CD8-positive, alpha-beta T cell (primary cell): ENCODE measurements at regions of chr2 and their contacts with region 1.

Region 1: GRCh38 chr2:190319555-190320498 is at the start of gene HIBCH:
- DNase-seq: peak; percentile 51 to 91 (median 83)
- ATAC-seq: peak; percentile 89
- H3K4me3 ChIP-seq: peak within 1 kb of the TSS; percentile 77 to 94
- H3K4me3 Mint-ChIP-seq: peak within 1 kb of the TSS; percentile 100
- H3K27ac ChIP-seq: peak within 1 kb of the TSS; percentile 66 to 88
- H3K27ac Mint-ChIP-seq: peak within 1 kb of the TSS; percentile 98
- H3K4me1 ChIP-seq: peaks cover 19% of the 10 kb centered on the region
- H3K4me1 Mint-ChIP-seq: peaks cover 50% of the 10 kb centered on the region
- H3K27me3 ChIP-seq: no peaks in the 10 kb centered on the region
- H3K27me3 Mint-ChIP-seq: no peaks in the 10 kb centered on the region
- CTCF ChIP-seq: peak; percentile 70
- total RNA-seq, gene HIBCH: 3.7 to 5.8 TPM

Region 2: GRCh38 chr2:190343500-190344275 is 23.9 kb after region 1 on chr2 and contains the start of gene INPP1:
- CTCF ChIA-PET with region 1: interaction called, 5 read pairs
- POLR2A ChIA-PET with region 1: interaction called, 4 read pairs
- intact Hi-C with region 1: loop called in 1 of 2 experiments (anchors 2 kb)
- DNase-seq: peak; percentile 5 to 62 (median 40)
- ATAC-seq: peak; percentile 71
- H3K4me3 ChIP-seq: peak within 1 kb of the TSS; percentile 54 to 74
- H3K4me3 Mint-ChIP-seq: peak within 1 kb of the TSS; percentile 89
- H3K27ac ChIP-seq: peak within 1 kb of the TSS; percentile 19 to 24
- H3K27ac Mint-ChIP-seq: peak within 1 kb of the TSS; percentile 75
- H3K4me1 ChIP-seq: peaks cover 13% of the 10 kb centered on the region
- H3K4me1 Mint-ChIP-seq: peaks cover 10% of the 10 kb centered on the region
- H3K27me3 ChIP-seq: no peaks in the 10 kb centered on the region
- H3K27me3 Mint-ChIP-seq: peaks cover 2% of the 10 kb centered on the region
- CTCF ChIP-seq: no peak
- total RNA-seq, gene INPP1: 1.6 to 2.9 TPM

Region 3: GRCh38 chr2:190376591-190377245 is 56.9 kb after region 1 on chr2:
- CTCF ChIA-PET with region 1: no interaction called
- POLR2A ChIA-PET with region 1: no interaction called
- intact Hi-C with region 1: loop called in 1 of 2 experiments (anchors 1 kb)
- DNase-seq: no peak
- ATAC-seq: no peak
- H3K4me3 ChIP-seq: no peak overlapping the region
- H3K4me3 Mint-ChIP-seq: no peak overlapping the region
- H3K27ac ChIP-seq: no peak overlapping the region
- H3K27ac Mint-ChIP-seq: no peak overlapping the region
- H3K4me1 ChIP-seq: no peaks in the 10 kb centered on the region
- H3K4me1 Mint-ChIP-seq: no peaks in the 10 kb centered on the region
- H3K27me3 ChIP-seq: peaks cover 0 to 2% of the 10 kb centered on the region in 2 experiments
- H3K27me3 Mint-ChIP-seq: no peaks in the 10 kb centered on the region
- CTCF ChIP-seq: no peak